Right lobe of liver (tissue), 6 donors: ENCODE measurements at regions of chr3 and their contacts with region 1.

Region 1: GRCh38 chr3:8964436-8965370 is 1.4 kb upstream of the RAD18 start:
- DNase-seq: no peak
- ATAC-seq: peak; percentile 72 to 75 (median 74)
- H3K4me3 ChIP-seq: no peak overlapping the region
- H3K27ac ChIP-seq: peak overlapping the region; percentile 52 to 83 (median 59)
- H3K4me1 ChIP-seq: peaks cover 0 to 42% (median 11%) of the 10 kb centered on the region in 4 donors
- H3K27me3 ChIP-seq: no peaks in the 10 kb centered on the region
- CTCF ChIP-seq: no peak
- POLR2A ChIP-seq: no peak

Region 2: DNA sequence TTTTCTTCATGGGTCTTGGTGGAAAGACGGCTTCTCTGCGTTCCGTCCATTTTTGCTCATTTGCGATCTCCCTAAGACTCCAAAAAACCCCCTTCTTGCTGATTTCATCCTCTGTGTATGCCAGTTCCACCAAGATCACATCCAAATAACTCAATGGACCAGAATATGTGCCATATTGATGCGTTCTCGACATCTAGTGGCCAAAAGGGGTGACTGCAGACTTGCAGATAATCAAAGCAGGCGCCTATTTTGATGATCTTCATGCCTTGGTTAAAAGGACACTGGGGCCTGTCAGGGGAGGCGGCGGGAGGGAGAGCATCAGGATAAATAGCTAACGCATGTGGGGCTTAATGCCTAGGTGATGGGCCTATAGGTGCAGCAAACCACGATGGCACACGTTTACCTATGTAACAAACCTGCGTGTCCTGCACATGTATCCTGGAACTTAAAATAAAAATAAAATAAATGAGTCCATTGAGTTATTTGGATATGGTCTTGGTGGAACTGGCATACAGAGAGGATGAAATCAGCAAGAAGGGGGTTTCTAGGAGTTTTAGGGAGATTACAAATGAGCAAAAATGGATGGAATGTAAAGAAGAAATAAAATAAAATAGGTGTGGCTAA is 102.8 kb after region 1 on chr3:
- intact Hi-C with region 1: loop called in 1 of 2 experiments (anchors 5 kb)
- DNase-seq: peak in 1 of 3 donors; percentile 25
- ATAC-seq: peak; percentile 84 to 96 (median 87)
- H3K4me3 ChIP-seq: no peak overlapping the region
- H3K27ac ChIP-seq: no peak overlapping the region
- H3K4me1 ChIP-seq: peaks cover 0 to 2% (median 0%) of the 10 kb centered on the region in 4 donors
- H3K27me3 ChIP-seq: no peaks in the 10 kb centered on the region
- CTCF ChIP-seq: peak; percentile 85 to 93 (median 86)
- POLR2A ChIP-seq: no peak